ENCODE measurements at regions of chr4 and their contacts with region 1.

Region 1: DNA sequence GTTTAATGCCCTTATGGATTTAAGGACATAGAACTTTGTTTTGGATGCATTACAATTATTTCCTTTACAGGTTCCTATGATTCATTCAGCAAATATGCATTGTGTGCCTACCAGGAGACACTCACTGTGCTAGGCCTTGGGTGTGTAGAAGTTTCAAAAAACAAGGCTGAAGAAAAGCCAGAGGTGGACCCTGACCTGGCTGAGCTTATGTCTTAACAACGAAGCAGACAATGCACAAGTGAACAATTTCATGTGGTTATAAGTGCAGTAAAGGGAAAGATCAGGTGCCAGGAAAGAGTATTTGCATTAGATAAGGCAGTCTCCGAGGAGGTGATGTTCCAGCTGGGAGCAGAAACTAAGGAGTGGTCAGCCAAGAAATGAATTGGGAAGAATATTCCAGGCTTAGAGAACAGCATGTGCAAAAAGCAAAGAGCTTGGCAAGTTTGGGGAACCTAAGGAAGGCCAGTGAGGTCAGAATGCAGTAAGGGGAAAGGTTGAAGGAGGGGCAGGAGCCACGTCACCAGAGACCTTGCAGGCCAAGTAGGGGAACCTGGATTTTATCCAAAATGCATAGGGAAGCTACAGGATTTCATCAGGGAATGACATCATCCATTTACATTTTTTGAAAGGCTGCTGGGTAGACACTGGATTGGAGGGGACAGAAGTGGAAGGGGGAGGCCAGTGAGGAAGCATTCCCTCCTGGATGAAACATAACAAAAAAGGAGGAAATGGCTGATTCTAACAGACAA is 193.6 kb downstream of the SOWAHB start:
- DNase-seq: peak; percentile 90
- H3K4me3 Mint-ChIP-seq: peak overlapping the region; percentile 24
- H3K27ac Mint-ChIP-seq: peak overlapping the region; percentile 82
- H3K4me1 Mint-ChIP-seq: peaks cover 55% of the 10 kb centered on the region
- H3K27me3 Mint-ChIP-seq: no peaks in the 10 kb centered on the region
- CTCF ChIP-seq: no peak

Region 2: DNA sequence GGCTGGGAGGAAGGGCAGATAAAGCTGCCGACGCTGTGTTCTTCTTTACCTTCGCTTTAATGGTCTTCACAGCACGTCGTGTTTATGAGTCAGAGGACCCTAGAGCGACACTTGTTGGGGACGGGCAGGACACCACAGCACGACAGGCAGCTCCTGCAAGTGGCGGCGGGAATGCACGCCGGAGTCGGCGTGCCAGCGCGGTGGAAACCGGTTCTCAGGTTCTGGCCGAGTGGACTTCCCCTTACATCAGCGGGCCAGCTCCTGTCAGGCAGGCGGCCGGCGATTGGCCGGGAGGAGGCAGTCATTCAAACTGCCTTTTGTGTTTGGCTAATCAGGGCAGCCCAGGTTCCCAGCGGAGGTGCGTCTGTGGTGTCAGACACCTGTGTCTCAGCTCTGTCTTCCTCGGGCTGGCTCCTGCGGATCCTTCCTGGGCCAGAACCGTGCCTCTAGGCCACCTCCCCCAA is 118.4 kb before region 1 on chr4:
- CTCF ChIA-PET with region 1: interaction called, 3 read pairs
- POLR2A ChIA-PET with region 1: interaction called, 18 read pairs
- intact Hi-C with region 1: no loop called
- DNase-seq: peak; percentile 85
- H3K4me3 Mint-ChIP-seq: peak overlapping the region; percentile 72
- H3K27ac Mint-ChIP-seq: peak overlapping the region; percentile 70
- H3K4me1 Mint-ChIP-seq: peaks cover 29% of the 10 kb centered on the region
- H3K27me3 Mint-ChIP-seq: no peaks in the 10 kb centered on the region
- CTCF ChIP-seq: peak; percentile 17

Region 3: DNA sequence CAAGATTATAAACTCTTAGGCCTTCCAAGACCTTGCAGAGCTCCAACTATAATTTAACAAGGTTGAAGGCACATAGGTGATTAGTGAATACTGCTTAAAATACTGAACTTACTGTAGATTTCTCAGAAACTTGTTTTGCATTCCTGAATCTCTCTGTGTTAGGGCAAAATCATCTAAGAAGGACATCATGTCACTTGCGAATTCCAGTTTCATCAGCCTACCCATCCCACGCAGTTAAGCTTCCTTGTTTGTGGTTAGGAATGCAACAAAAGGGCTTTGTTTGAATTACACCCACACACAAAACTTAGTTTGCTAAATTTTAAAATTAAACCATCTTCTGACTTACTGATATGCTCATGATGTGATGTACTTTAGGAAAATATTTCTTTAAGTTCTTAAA is 19.6 kb after region 1 on chr4:
- CTCF ChIA-PET with region 1: no interaction called
- POLR2A ChIA-PET with region 1: interaction called, 16 read pairs
- intact Hi-C with region 1: no loop called
- DNase-seq: peak; percentile 59
- H3K4me3 Mint-ChIP-seq: no peak overlapping the region
- H3K27ac Mint-ChIP-seq: peak overlapping the region; percentile 28
- H3K4me1 Mint-ChIP-seq: peaks cover 31% of the 10 kb centered on the region
- H3K27me3 Mint-ChIP-seq: no peaks in the 10 kb centered on the region
- CTCF ChIP-seq: no peak

Region 4: GRCh38 chr4:76765473-76766183 is 61.3 kb after region 1 on chr4:
- CTCF ChIA-PET with region 1: no interaction called
- POLR2A ChIA-PET with region 1: no interaction called
- intact Hi-C with region 1: no loop called
- DNase-seq: no peak
- H3K4me3 Mint-ChIP-seq: no peak overlapping the region
- H3K27ac Mint-ChIP-seq: no peak overlapping the region
- H3K4me1 Mint-ChIP-seq: no peaks in the 10 kb centered on the region
- H3K27me3 Mint-ChIP-seq: no peaks in the 10 kb centered on the region
- CTCF ChIP-seq: no peak

Measured in MCF 10A (cell line).